Activated CD4-positive, alpha-beta memory T cell treated with anti-CD3 and anti-CD28 coated beads for 36 hours (primary cell): ENCODE measurements at regions of chr5 and their contacts with region 1.

Region 1: GRCh38 chr5:32232441-32233219 is 58.5 kb upstream of the GOLPH3 start:
- DNase-seq: peak; percentile 85
- H3K4me3 Mint-ChIP-seq: no peak overlapping the region
- H3K27ac Mint-ChIP-seq: no peak overlapping the region
- H3K4me1 Mint-ChIP-seq: no peaks in the 10 kb centered on the region
- H3K27me3 Mint-ChIP-seq: no peaks in the 10 kb centered on the region

Region 2: GRCh38 chr5:32312647-32313523 is 80.3 kb after region 1 on chr5 and contains the start of gene MTMR12:
- CTCF ChIA-PET with region 1: interaction called, 17 read pairs
- POLR2A ChIA-PET with region 1: no interaction called
- intact Hi-C with region 1: loop called (anchors 5 kb)
- DNase-seq: peak; percentile 100
- H3K4me3 Mint-ChIP-seq: peak within 1 kb of the TSS; percentile 86
- H3K27ac Mint-ChIP-seq: peak within 1 kb of the TSS; percentile 85
- H3K4me1 Mint-ChIP-seq: peaks cover 22% of the 10 kb centered on the region
- H3K27me3 Mint-ChIP-seq: no peaks in the 10 kb centered on the region
- total RNA-seq, gene MTMR12: 22.3 to 22.4 TPM

Region 3: DNA sequence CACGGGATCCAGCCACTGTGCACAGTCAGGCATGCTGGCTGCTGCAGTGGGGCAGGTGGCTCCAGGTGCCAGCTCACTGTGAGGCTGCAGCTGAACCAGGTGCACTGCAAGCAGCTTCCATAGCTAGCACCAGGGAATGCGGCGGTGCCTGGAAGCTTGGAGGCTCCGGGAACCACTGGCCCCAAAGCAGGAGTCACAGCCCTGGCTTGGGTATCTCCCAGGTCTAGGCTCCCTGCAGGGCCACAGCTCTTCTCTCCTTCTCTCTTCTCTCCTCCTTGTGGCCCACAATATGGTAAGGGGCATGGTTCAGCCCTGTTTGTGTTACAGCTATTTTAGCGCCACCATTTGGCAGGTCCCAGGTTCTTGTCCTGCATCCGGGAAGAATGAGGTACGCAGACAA is 86.8 kb after region 1 on chr5:
- CTCF ChIA-PET with region 1: interaction called, 17 read pairs
- POLR2A ChIA-PET with region 1: no interaction called
- intact Hi-C with region 1: loop called (anchors 5 kb)
- DNase-seq: no peak
- H3K4me3 Mint-ChIP-seq: no peak overlapping the region
- H3K27ac Mint-ChIP-seq: no peak overlapping the region
- H3K4me1 Mint-ChIP-seq: no peaks in the 10 kb centered on the region
- H3K27me3 Mint-ChIP-seq: no peaks in the 10 kb centered on the region

Region 4: GRCh38 chr5:32329308-32329834 is 96.7 kb after region 1 on chr5:
- CTCF ChIA-PET with region 1: interaction called, 271 read pairs
- POLR2A ChIA-PET with region 1: interaction called, 3 read pairs
- intact Hi-C with region 1: loop called (anchors 1 kb)
- DNase-seq: peak; percentile 74
- H3K4me3 Mint-ChIP-seq: no peak overlapping the region
- H3K27ac Mint-ChIP-seq: no peak overlapping the region
- H3K4me1 Mint-ChIP-seq: peaks cover 2% of the 10 kb centered on the region
- H3K27me3 Mint-ChIP-seq: no peaks in the 10 kb centered on the region

Region 5: DNA sequence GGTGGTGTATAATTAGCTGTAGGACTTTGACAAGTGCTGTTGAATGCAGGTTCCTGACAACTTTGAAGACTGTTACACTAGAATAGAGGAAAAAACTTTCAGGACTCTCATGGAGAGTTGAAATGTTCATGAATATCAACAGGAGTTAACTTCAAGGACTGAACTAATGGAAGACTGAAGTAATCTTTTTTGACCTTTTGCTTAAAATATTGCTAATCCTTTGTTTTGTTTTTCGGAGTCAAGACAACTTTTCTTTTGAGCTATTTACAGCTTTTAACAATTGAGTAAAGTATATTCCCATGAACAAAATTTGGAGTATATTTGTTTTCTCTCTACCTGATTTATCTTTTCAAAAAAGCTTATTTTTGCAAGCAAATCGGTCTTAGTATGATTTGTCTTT is 114.2 kb after region 1 on chr5:
- CTCF ChIA-PET with region 1: interaction called, 19 read pairs
- POLR2A ChIA-PET with region 1: no interaction called
- intact Hi-C with region 1: no loop called
- DNase-seq: no peak
- H3K4me3 Mint-ChIP-seq: no peak overlapping the region
- H3K27ac Mint-ChIP-seq: no peak overlapping the region
- H3K4me1 Mint-ChIP-seq: peaks cover 3% of the 10 kb centered on the region
- H3K27me3 Mint-ChIP-seq: no peaks in the 10 kb centered on the region

Region 6: GRCh38 chr5:32383065-32383464 is 150.4 kb after region 1 on chr5:
- CTCF ChIA-PET with region 1: interaction called, 11 read pairs
- POLR2A ChIA-PET with region 1: no interaction called
- intact Hi-C with region 1: no loop called
- DNase-seq: no peak
- H3K4me3 Mint-ChIP-seq: no peak overlapping the region
- H3K27ac Mint-ChIP-seq: no peak overlapping the region
- H3K4me1 Mint-ChIP-seq: peaks cover under 1% of the 10 kb centered on the region
- H3K27me3 Mint-ChIP-seq: no peaks in the 10 kb centered on the region

Region 7: DNA sequence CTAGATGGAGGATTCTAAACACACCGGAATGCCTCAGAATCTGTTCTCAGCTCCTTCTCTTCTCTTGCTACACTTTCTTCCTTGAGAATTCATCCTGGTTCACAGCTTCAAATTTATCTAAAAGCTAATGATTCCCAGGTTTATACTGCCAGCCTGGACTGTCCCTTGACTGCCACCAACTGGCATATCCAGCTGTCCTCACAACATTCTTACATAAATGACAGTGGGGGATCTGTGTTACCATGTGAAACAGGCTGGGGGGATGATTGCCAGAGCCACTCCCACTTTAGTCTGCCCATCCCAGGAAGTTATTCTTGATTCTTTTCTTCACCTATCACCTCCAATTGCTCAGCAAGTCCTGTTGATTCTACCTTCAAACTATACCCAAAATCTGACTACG is 239.2 kb after region 1 on chr5:
- CTCF ChIA-PET with region 1: no interaction called
- POLR2A ChIA-PET with region 1: no interaction called
- intact Hi-C with region 1: no loop called
- DNase-seq: no peak
- H3K4me3 Mint-ChIP-seq: no peak overlapping the region
- H3K27ac Mint-ChIP-seq: no peak overlapping the region
- H3K4me1 Mint-ChIP-seq: no peaks in the 10 kb centered on the region
- H3K27me3 Mint-ChIP-seq: no peaks in the 10 kb centered on the region

Region 8: DNA sequence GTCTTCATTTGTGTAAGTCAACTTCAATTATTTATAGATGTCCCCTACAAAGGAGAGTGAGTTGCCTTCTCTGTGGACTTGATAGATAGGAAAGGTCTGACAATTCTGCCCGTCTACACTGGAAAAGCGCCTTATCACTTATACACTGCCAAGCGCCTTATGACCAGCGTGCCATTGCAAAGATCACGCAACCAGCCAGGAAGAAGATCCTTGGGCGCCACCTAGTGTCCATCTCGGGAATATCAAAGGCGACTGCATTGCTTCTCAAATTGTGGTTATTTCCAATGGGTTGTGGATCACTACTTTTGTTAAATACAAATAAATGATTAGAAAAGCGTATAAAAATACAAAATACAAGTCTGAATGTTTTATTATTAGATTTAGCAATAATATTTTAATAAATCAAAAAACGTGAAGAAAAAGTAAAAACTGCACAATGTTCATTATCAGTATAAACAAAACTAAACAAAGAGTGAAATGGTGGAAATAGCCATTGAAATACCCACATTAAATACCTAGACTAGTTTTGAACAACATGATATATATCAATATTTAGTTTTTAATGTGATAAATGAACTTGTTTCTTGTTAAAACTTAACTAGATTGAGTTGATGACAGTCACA is 380.5 kb after region 1 on chr5:
- CTCF ChIA-PET with region 1: interaction called, 24 read pairs
- POLR2A ChIA-PET with region 1: no interaction called
- intact Hi-C with region 1: loop called (anchors 1 kb)
- DNase-seq: peak; percentile 90
- H3K4me3 Mint-ChIP-seq: no peak overlapping the region
- H3K27ac Mint-ChIP-seq: no peak overlapping the region
- H3K4me1 Mint-ChIP-seq: peaks cover 4% of the 10 kb centered on the region
- H3K27me3 Mint-ChIP-seq: no peaks in the 10 kb centered on the region